H1 (cell line): ENCODE measurements at regions of chr10 and their contacts with region 1.

Region 1: GRCh38 chr10:71569775-71570588 is 149.6 kb downstream of the C10orf105 start:
- DNase-seq: peak; percentile 59 to 98
- H3K4me3 ChIP-seq: no peak overlapping the region
- H3K27ac ChIP-seq: no peak overlapping the region
- H3K4me1 ChIP-seq: peaks cover 3 to 11% (median 6%) of the 10 kb centered on the region in 4 experiments; a peak in 5 of 7 replicates
- H3K27me3 ChIP-seq: 0 out of 7 replicates have a peak, but pooled peaks cover 0 to 2% (median 0%) of the 10 kb centered on the region in 4 experiments
- CTCF ChIP-seq: peak; percentile 74 to 93 (median 89)
- EP300 ChIP-seq: no peak
- POLR2A ChIP-seq: no peak
- RAD21 ChIP-seq: peak; percentile 87 to 93

Region 2: DNA sequence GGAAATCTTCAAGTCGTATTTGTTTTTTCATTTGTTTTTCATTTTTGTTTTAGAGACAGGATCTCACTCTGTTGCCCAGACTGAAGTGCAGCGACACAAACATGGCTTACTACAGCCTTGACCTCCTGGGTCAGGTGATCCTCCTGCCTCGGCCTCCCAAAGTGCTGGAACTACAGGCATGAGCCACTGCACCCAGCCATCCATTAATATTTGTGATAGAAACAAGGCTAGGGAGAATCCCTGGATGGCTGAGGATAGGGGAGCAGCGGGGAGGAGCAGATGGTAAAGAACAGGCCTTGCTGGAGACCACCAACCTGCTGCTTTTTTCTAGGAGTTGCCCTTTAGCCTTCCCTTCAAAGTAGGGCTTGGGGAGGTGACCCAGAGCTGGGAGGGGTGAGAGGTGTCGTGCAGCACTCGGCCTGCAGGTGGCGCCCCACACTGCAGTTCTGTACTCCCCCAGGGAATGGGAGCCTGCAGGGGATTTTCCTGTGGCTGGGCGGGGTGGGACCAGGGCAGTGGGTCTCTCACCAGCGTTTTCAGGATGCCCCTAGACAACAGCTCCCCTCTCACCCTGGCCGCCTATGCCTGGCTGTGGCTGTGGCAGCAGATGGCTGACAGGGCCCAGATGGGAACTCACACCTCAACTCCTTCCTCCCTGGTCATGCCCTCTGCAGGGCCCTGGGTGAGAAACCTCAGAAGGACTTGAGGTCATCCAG is 185.9 kb before region 1 on chr10:
- CTCF ChIA-PET with region 1: interaction called, 16 read pairs
- POLR2A ChIA-PET with region 1: no interaction called
- DNase-seq: peak; percentile 58 to 99
- H3K4me3 ChIP-seq: no peak overlapping the region
- H3K27ac ChIP-seq: no peak overlapping the region
- H3K4me1 ChIP-seq: no peaks in the 10 kb centered on the region
- H3K27me3 ChIP-seq: no peaks in the 10 kb centered on the region
- CTCF ChIP-seq: peak; percentile 93 to 96 (median 95)
- EP300 ChIP-seq: no peak
- POLR2A ChIP-seq: no peak
- RAD21 ChIP-seq: peak; percentile 91 to 92

Region 3: GRCh38 chr10:71459513-71459912 is 110.5 kb before region 1 on chr10:
- CTCF ChIA-PET with region 1: interaction called, 18 read pairs
- POLR2A ChIA-PET with region 1: no interaction called
- DNase-seq: no peak
- H3K4me3 ChIP-seq: no peak overlapping the region
- H3K27ac ChIP-seq: no peak overlapping the region
- H3K4me1 ChIP-seq: no peaks in the 10 kb centered on the region
- H3K27me3 ChIP-seq: no peaks in the 10 kb centered on the region
- CTCF ChIP-seq: peak; percentile 38 to 62 (median 40)
- EP300 ChIP-seq: no peak
- POLR2A ChIP-seq: no peak
- RAD21 ChIP-seq: peak; percentile 27 to 45; a peak in 3 of 4 replicates

Region 4: GRCh38 chr10:71512775-71513539 is 57.0 kb before region 1 on chr10:
- CTCF ChIA-PET with region 1: interaction called, 71 read pairs
- POLR2A ChIA-PET with region 1: no interaction called
- DNase-seq: no peak
- H3K4me3 ChIP-seq: no peak overlapping the region
- H3K27ac ChIP-seq: no peak overlapping the region
- H3K4me1 ChIP-seq: peaks cover 0 to 5% (median 0%) of the 10 kb centered on the region in 4 experiments; a peak in 1 of 7 replicates
- H3K27me3 ChIP-seq: no peaks in the 10 kb centered on the region
- CTCF ChIP-seq: no peak
- EP300 ChIP-seq: no peak
- POLR2A ChIP-seq: no peak
- RAD21 ChIP-seq: no peak

Region 5: DNA sequence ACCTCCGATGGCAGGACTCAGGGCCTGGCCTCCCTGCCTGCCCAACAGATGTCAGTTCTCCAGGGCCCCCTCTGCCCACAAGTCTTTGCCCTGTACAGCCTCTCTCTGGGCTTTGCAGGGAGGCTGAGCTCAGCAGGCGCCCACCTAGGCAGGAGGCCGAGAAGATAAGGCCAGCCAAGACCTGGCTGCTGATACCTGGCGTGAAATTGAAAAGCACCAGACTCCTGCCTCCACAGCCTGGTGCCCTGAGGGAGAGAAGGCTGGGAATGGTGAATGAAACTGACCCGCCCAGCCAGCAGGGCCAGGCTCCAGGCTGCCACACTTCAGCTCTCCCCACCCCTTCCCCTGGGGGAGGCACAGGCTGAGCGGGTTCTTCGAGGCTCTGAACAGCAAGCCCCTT is 27.5 kb before region 1 on chr10:
- CTCF ChIA-PET with region 1: interaction called, 63 read pairs
- POLR2A ChIA-PET with region 1: no interaction called
- DNase-seq: no peak
- H3K4me3 ChIP-seq: no peak overlapping the region
- H3K27ac ChIP-seq: no peak overlapping the region
- H3K4me1 ChIP-seq: peaks cover 9 to 34% (median 20%) of the 10 kb centered on the region in 4 experiments
- H3K27me3 ChIP-seq: no peaks in the 10 kb centered on the region; a peak in 1 of 7 replicates
- CTCF ChIP-seq: no peak
- EP300 ChIP-seq: no peak
- POLR2A ChIP-seq: no peak
- RAD21 ChIP-seq: no peak

Region 6: DNA sequence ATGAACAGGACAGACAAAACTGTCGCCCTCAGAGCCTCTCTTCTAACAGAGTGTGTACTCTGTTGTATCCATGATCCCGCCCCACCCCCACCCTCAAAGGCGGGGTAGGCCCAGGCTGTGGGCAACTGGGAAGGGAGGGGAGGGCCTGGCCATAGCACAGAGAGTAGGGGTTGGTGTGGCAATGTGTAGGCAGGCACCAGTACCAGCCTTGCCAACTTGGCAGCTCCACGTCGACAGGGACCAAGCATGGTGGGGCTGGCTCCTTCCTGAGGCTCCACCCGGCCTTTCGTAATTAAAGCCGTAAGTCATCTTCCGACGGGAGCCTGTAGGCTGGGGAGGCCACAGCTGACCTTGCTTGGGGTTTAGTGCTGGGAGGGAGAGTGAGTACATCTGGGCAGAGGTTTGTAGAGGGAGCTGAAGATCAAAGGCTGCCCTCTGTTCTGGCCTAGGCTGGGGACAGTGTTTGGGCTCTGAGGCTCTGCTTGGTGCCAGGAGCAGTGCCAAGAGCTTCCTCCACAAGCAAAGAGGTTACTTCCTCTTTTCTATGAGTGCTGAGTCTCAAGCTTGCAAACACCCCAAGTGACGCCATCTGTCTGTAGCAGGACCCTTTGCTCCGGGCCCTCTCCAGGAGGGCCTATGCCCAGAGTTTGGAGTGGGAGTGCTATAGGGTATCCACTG is 28.0 kb after region 1 on chr10:
- CTCF ChIA-PET with region 1: interaction called, 13 read pairs
- POLR2A ChIA-PET with region 1: no interaction called
- DNase-seq: no peak
- H3K4me3 ChIP-seq: no peak overlapping the region
- H3K27ac ChIP-seq: no peak overlapping the region
- H3K4me1 ChIP-seq: no peaks in the 10 kb centered on the region
- H3K27me3 ChIP-seq: no peaks in the 10 kb centered on the region
- CTCF ChIP-seq: no peak
- EP300 ChIP-seq: no peak
- POLR2A ChIP-seq: no peak
- RAD21 ChIP-seq: no peak

Region 7: DNA sequence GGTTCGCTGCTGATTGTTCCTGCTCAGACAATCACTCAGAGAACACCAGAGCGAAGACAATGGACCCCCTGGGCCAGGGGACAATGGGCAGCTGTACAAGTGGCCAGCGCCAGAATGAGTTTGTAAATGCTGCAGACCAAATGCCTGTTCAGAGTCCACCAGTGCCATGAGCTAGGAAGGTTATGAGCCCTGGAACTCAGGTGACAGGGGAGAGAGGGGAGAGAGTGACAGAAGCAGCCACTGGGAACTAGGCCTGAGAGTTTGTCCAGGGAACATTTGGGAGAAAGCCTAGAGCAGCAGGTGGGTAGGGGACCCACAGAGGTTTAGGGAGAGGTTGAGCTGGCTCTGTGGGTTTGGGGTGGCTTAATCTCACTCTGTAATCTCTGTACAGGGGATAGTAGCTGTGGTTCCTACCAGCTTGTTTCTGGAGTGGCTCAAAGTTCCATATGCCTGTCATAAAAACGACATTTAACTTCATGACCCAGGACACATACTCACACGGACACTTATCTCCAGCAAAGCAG is 89.2 kb after region 1 on chr10:
- CTCF ChIA-PET with region 1: interaction called, 13 read pairs
- POLR2A ChIA-PET with region 1: no interaction called
- DNase-seq: peak in 1 of 2 experiments; percentile 19
- H3K4me3 ChIP-seq: no peak overlapping the region; a peak in 3 of 8 replicates
- H3K27ac ChIP-seq: no peak overlapping the region
- H3K4me1 ChIP-seq: peaks cover 22 to 36% (median 31%) of the 10 kb centered on the region in 4 experiments
- H3K27me3 ChIP-seq: peaks cover 0 to 19% (median 13%) of the 10 kb centered on the region in 4 experiments; a peak in 4 of 7 replicates
- CTCF ChIP-seq: no peak
- EP300 ChIP-seq: no peak
- POLR2A ChIP-seq: no peak
- RAD21 ChIP-seq: no peak